Activated T-helper 2 cell treated with anti-CD3 and anti-CD28 coated beads, Interferon-gamma antibody, Interleukin-2, Interleukin-4, amounts not matched to agents 10 μg/mL and 5 μg/mL and 100 μg/mL, durations not matched to agents 14 hours and 24 hours and 36 hours (primary cell): ENCODE measurements at regions of chr5 and their contacts with region 1.

Region 1: GRCh38 chr5:149268928-149269557 is 2.6 kb upstream of the AFAP1L1 start:
- DNase-seq: no peak
- H3K4me3 Mint-ChIP-seq: no peak overlapping the region
- H3K27ac Mint-ChIP-seq: no peak overlapping the region
- H3K4me1 Mint-ChIP-seq: peaks cover 7% of the 10 kb centered on the region
- H3K27me3 Mint-ChIP-seq: peaks cover 45% of the 10 kb centered on the region

Region 2: GRCh38 chr5:149141224-149141956 is 127.7 kb before region 1 on chr5 and contains the start of gene ABLIM3:
- intact Hi-C with region 1: loop called (anchors 1 kb)
- DNase-seq: peak; percentile 63
- H3K4me3 Mint-ChIP-seq: no peak within 1 kb of the TSS
- H3K27ac Mint-ChIP-seq: no peak within 1 kb of the TSS
- H3K4me1 Mint-ChIP-seq: no peaks in the 10 kb centered on the region
- H3K27me3 Mint-ChIP-seq: peaks cover 40% of the 10 kb centered on the region
- total RNA-seq, gene ABLIM3: not detected in 2 replicates